HCT116 (cell line): ENCODE measurements at regions of chr22 and their contacts with region 1.

Region 1: DNA sequence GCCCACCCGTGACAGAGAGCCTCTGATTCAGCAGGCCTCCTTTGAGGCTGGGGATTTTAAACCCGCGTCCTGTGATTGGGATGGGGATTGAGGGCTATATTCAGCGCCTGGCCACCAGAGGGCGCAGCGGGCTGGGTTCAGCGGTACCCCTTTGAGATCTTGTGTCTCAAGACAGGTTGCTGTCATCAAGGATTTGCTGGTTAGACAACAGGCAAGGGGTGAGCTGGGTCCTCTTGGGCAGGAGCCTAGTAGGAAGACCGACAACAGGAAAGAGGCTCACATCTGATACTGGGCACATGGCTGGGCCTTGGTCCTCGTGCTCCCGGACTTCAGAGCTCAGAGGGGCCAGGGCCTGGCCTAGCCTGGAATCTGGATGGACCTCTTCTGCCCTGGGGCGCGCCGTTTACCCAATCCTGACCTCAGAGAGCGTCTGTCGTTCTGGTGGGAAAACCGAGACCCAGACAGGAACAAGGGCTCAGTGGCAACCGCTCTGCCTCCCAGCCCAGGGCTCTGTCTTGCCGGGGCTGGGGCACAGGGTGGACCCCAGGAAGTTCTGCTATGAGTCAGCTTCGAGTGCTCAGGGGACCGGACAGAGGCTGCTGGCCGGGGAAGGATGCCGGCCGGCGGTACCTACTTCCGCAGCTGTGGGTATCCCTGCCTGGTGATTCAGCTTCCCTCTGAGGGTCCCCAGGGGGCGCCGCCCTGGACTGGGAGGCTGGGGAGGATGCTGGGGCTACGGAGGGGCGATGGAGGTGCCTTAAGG is 929 bp upstream of the SLC35E4 start:
- DNase-seq: peak; percentile 73
- ATAC-seq: peak; percentile 72
- H3K4me3 ChIP-seq: peak overlapping the region in 1 of 2 experiments; percentile 63; a peak in 1 of 4 replicates
- H3K27ac ChIP-seq: peak overlapping the region; percentile 57
- H3K4me1 ChIP-seq: peaks cover 17 to 29% of the 10 kb centered on the region in 2 experiments
- H3K27me3 ChIP-seq: no peaks in the 10 kb centered on the region
- CTCF ChIP-seq: peak; percentile 91 to 93 (median 93)
- POLR2A ChIP-seq: no peak
- RAD21 ChIP-seq: peak; percentile 94

Region 2: GRCh38 chr22:30591588-30592359 is 42.9 kb before region 1 on chr22 and contains the start of gene PES1:
- CTCF ChIA-PET with region 1: no interaction called
- POLR2A ChIA-PET with region 1: no interaction called
- RAD21 ChIA-PET with region 1: no interaction called
- intact Hi-C with region 1: loop called (anchors 1 kb)
- DNase-seq: peak; percentile 99
- ATAC-seq: peak; percentile 99
- H3K4me3 ChIP-seq: peak within 1 kb of the TSS; percentile 91 to 95
- H3K27ac ChIP-seq: peak within 1 kb of the TSS; percentile 66
- H3K4me1 ChIP-seq: peaks cover 9 to 20% of the 10 kb centered on the region in 2 experiments; a peak in 3 of 4 replicates
- H3K27me3 ChIP-seq: no peaks in the 10 kb centered on the region
- CTCF ChIP-seq: no peak
- POLR2A ChIP-seq: no peak
- RAD21 ChIP-seq: no peak
- total RNA-seq, gene PES1: 167 TPM

Region 3: GRCh38 chr22:30649430-30650007 is 14.9 kb after region 1 on chr22:
- CTCF ChIA-PET with region 1: interaction called, 17 read pairs
- POLR2A ChIA-PET with region 1: interaction called, 11 read pairs
- RAD21 ChIA-PET with region 1: no interaction called
- intact Hi-C with region 1: no loop called
- DNase-seq: peak; percentile 78
- ATAC-seq: peak; percentile 99
- H3K4me3 ChIP-seq: peak overlapping the region in 1 of 2 experiments; percentile 29; a peak in 2 of 4 replicates
- H3K27ac ChIP-seq: peak overlapping the region; percentile 59
- H3K4me1 ChIP-seq: peaks cover 18 to 30% of the 10 kb centered on the region in 2 experiments
- H3K27me3 ChIP-seq: no peaks in the 10 kb centered on the region
- CTCF ChIP-seq: peak in 2 of 3 experiments; percentile 52 to 53; a peak in 4 of 6 replicates
- POLR2A ChIP-seq: no peak
- RAD21 ChIP-seq: no peak

Region 4: GRCh38 chr22:30705710-30706651 is 71.3 kb after region 1 on chr22:
- CTCF ChIA-PET with region 1: no interaction called
- POLR2A ChIA-PET with region 1: no interaction called
- RAD21 ChIA-PET with region 1: no interaction called
- intact Hi-C with region 1: loop called (anchors 5 kb)
- DNase-seq: peak; percentile 70
- ATAC-seq: peak; percentile 80
- H3K4me3 ChIP-seq: 0 out of 4 replicates have a peak overlapping the region, but pooled peaks of 1 of the 2 experiments have one; percentile 8
- H3K27ac ChIP-seq: peak overlapping the region; percentile 29; the same call in 1 of the 2 replicates
- H3K4me1 ChIP-seq: peaks cover 46 to 68% of the 10 kb centered on the region in 2 experiments
- H3K27me3 ChIP-seq: no peaks in the 10 kb centered on the region
- CTCF ChIP-seq: no peak
- POLR2A ChIP-seq: no peak
- RAD21 ChIP-seq: no peak

Region 5: GRCh38 chr22:30754971-30755756 is 120.5 kb after region 1 on chr22:
- CTCF ChIA-PET with region 1: interaction called, 95 read pairs
- POLR2A ChIA-PET with region 1: interaction called, 15 read pairs
- RAD21 ChIA-PET with region 1: interaction called, 16 to 27 read pairs
- intact Hi-C with region 1: loop called (anchors 1 kb)
- DNase-seq: peak; percentile 66
- ATAC-seq: peak; percentile 96
- H3K4me3 ChIP-seq: no peak overlapping the region
- H3K27ac ChIP-seq: no peak overlapping the region
- H3K4me1 ChIP-seq: peaks cover 0 to 6% of the 10 kb centered on the region in 2 experiments; a peak in 1 of 4 replicates
- H3K27me3 ChIP-seq: no peaks in the 10 kb centered on the region
- CTCF ChIP-seq: peak; percentile 80 to 87 (median 82)
- POLR2A ChIP-seq: no peak
- RAD21 ChIP-seq: peak; percentile 97

Region 6: GRCh38 chr22:30920407-30920806 is 285.8 kb after region 1 on chr22:
- CTCF ChIA-PET with region 1: interaction called, 4 read pairs
- POLR2A ChIA-PET with region 1: no interaction called
- RAD21 ChIA-PET with region 1: no interaction called
- intact Hi-C with region 1: loop called (anchors 10 kb)
- DNase-seq: peak; percentile 32
- ATAC-seq: peak; percentile 94
- H3K4me3 ChIP-seq: no peak overlapping the region
- H3K27ac ChIP-seq: no peak overlapping the region
- H3K4me1 ChIP-seq: no peaks in the 10 kb centered on the region
- H3K27me3 ChIP-seq: no peaks in the 10 kb centered on the region
- CTCF ChIP-seq: peak; percentile 82 to 91 (median 83)
- POLR2A ChIP-seq: no peak
- RAD21 ChIP-seq: peak; percentile 85